ENCODE measurements at regions of chr1 and their contacts with region 1.

Region 1: DNA sequence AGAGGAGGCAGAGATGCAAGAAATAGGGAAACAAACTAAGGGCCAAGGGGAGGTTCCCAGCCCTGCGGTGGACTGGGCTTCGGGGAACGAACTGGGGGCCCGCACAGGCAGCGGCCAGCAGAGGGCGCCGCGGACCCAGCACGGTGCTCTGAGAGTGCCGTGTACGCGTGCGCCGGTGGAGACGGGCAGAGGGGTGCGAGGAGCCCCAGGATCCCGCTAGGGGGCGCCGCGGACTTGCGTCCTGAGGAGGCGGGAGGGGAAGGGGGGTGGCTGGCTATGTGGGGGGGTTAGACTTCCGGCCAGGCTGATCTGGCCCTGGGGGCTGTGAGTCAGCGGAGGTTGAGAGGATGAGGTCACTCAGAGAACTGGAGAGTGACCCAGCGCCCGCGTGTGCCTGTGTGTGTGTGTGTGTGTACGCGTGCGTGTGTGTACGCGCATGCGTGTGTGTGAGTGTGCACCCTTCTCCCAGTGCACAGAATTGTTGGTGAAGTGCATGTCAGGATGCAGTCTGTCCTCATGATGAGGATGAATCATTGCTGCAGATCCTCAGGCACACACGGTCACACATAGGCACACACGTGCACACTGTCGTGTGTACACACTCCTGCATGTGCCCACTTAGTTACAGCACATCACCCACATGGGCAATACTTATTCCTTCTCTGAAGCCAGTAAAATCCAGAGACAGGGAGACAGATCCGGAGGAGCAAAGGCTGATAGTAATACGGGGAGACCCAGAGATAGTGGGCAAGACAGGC is 17.0 kb downstream of the NES start:
- DNase-seq: peak; percentile 70
- ATAC-seq: peak; percentile 84
- H3K4me3 ChIP-seq: peak overlapping the region; percentile 94
- H3K27ac ChIP-seq: peak overlapping the region; percentile 90
- H3K4me1 ChIP-seq: peaks cover 74% of the 10 kb centered on the region
- H3K27me3 ChIP-seq: 0 out of 4 replicates have a peak, but pooled peaks cover 0 to 2% of the 10 kb centered on the region in 2 experiments
- CTCF ChIP-seq: peak; percentile 99 to 100 (median 100); a peak in 5 of 6 replicates
- EP300 ChIP-seq: no peak
- POLR2A ChIP-seq: peak; percentile 69
- RAD21 ChIP-seq: peak; percentile 81

Region 2: DNA sequence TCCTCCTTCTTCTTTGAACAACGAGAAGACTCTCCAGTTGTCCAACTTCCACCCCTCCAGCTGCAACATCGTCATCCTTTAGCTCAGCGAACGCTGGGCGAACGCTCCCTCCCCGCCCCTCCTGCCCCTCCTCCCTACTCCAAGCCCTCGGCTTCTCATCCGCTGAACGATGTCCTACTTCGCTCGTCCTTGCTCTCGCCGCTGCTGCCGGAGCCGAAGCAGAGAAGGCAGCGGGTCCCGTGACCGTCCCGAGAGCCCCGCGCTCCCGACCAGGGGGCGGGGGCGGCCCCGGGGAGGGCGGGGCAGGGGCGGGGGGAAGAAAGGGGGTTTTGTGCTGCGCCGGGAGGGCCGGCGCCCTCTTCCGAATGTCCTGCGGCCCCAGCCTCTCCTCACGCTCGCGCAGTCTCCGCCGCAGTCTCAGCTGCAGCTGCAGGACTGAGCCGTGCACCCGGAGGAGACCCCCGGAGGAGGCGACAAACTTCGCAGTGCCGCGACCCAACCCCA is 18.4 kb before region 1 on chr1 and contains the start of gene BCAN:
- CTCF ChIA-PET with region 1: interaction called, 15 read pairs
- POLR2A ChIA-PET with region 1: interaction called, 4 read pairs
- RAD21 ChIA-PET with region 1: no interaction called
- SMC1A ChIA-PET with region 1: interaction called, 5 read pairs
- in situ Hi-C with region 1: no loop called
- intact Hi-C with region 1: no loop called
- DNase-seq: no peak
- ATAC-seq: peak; percentile 37
- H3K4me3 ChIP-seq: no peak within 1 kb of the TSS
- H3K27ac ChIP-seq: no peak within 1 kb of the TSS
- H3K4me1 ChIP-seq: peaks cover 8% of the 10 kb centered on the region
- H3K27me3 ChIP-seq: peaks cover 0 to 2% of the 10 kb centered on the region in 2 experiments
- CTCF ChIP-seq: no peak
- EP300 ChIP-seq: no peak
- POLR2A ChIP-seq: no peak
- RAD21 ChIP-seq: no peak
- polyA plus RNA-seq, gene BCAN: 0.05 to 0.06 TPM

Region 3: GRCh38 chr1:156677616-156678596 is 17.7 kb after region 1 on chr1:
- CTCF ChIA-PET with region 1: interaction called, 192 read pairs
- POLR2A ChIA-PET with region 1: interaction called, 5 read pairs
- RAD21 ChIA-PET with region 1: interaction called, 58 read pairs
- SMC1A ChIA-PET with region 1: interaction called, 33 read pairs
- in situ Hi-C with region 1: no loop called
- intact Hi-C with region 1: loop called (anchors 1 kb)
- DNase-seq: no peak
- ATAC-seq: peak; percentile 70
- H3K4me3 ChIP-seq: no peak overlapping the region
- H3K27ac ChIP-seq: no peak overlapping the region
- H3K4me1 ChIP-seq: peaks cover 9% of the 10 kb centered on the region
- H3K27me3 ChIP-seq: peaks cover 16 to 21% of the 10 kb centered on the region in 2 experiments
- CTCF ChIP-seq: peak; percentile 79 to 86 (median 83)
- EP300 ChIP-seq: no peak
- POLR2A ChIP-seq: no peak
- RAD21 ChIP-seq: peak; percentile 96

Region 4: DNA sequence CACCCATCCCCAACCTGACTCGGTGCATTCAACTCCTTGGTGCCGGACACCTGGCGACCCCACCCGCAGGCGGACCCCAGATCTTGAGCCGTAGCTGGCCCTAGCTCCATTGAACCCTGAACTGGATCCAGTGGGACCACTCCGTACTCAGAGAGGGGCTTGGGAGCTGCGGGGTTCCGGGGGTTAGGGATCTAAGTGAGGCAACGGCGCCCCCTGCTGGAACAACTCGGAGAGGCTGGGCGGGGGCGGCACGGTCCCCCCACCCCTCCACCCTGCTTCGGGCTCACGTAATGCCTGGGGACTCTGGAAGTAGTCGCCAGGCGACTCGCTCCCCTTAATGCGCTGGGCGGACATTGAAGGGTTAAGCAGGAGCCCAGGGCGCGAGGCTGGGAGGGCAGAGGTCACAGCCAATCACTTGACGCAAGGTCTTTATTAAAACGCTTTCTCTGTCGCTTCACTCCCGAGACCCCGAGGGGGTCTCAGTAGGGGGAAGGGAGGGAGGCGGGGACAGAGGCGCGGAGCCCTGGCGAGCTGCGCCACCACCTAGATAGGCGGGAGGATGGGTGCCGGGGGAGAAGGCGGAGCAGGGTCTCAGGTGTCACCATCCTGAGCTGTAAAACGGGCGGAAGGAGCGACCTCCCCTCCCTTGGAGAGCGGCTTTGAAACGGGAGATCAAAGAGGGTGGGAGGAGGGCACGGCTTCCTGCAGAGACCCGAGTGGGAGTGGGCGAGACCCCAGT is 45.9 kb after region 1 on chr1:
- CTCF ChIA-PET with region 1: interaction called, 16 read pairs
- POLR2A ChIA-PET with region 1: no interaction called
- RAD21 ChIA-PET with region 1: interaction called, 19 read pairs
- SMC1A ChIA-PET with region 1: interaction called, 3 read pairs
- in situ Hi-C with region 1: no loop called
- intact Hi-C with region 1: no loop called
- DNase-seq: no peak
- ATAC-seq: peak; percentile 81
- H3K4me3 ChIP-seq: peak overlapping the region; percentile 35; the same call in 1 of the 2 replicates
- H3K27ac ChIP-seq: no peak overlapping the region
- H3K4me1 ChIP-seq: peaks cover 6% of the 10 kb centered on the region
- H3K27me3 ChIP-seq: peaks cover 10 to 15% of the 10 kb centered on the region in 2 experiments
- CTCF ChIP-seq: peak; percentile 60 to 74 (median 67)
- EP300 ChIP-seq: no peak
- POLR2A ChIP-seq: peak; percentile 11; the same call in 1 of the 2 replicates
- RAD21 ChIP-seq: peak; percentile 53